ENCODE measurements at regions of chr7 and their contacts with region 1.

Region 1: GRCh38 chr7:1523844-1524243 is 6.7 kb upstream of the MAFK start:
- DNase-seq: no peak
- H3K27ac ChIP-seq: no peak overlapping the region
- CTCF ChIP-seq: no peak

Region 2: DNA sequence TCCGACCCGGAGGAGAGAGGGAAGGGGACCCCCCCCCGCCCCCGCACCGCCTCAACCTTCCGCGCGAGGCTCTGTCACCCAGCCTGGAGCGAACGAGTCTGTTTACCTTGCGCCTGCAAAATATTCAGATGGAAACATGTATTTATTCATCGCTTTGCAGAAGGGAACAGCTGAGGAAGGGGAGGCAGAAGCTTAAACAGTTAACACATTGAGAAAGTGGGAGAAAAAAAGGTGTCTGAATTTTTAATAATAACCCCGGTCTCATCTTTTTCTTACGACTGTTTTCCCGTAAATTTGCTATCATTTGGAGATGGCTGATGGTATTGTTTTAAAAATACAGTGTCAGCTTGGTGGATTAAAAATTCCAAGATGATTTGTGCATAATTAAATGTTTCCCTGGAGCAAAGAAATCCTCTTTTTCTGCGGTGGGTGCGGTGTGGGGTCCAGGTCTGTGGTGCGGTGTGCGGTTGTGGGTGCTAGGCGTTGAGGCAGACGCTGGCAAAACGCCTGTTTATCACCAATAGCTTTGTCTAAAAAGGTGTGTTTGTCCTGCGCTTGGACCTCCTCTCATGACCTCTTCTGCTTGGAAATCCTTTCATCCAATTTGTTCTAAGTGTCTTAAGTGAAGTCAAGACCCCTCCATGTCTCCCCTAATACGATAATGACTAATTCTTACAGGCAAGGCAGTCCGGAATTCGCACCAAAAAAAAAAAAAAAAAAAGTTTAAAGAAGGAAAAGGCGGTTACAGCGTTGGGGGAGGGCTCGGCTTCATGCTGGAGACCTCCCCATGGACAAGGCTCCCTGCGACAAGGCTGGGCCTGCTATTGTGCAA is 289.6 kb before region 1 on chr7:
- CTCF ChIA-PET with region 1: no interaction called
- POLR2A ChIA-PET with region 1: interaction called, 11 read pairs
- DNase-seq: no peak
- H3K27ac ChIP-seq: no peak overlapping the region
- CTCF ChIP-seq: no peak